SK-N-SH (cell line): ENCODE measurements at regions of chr3 and their contacts with region 1.

Region 1: DNA sequence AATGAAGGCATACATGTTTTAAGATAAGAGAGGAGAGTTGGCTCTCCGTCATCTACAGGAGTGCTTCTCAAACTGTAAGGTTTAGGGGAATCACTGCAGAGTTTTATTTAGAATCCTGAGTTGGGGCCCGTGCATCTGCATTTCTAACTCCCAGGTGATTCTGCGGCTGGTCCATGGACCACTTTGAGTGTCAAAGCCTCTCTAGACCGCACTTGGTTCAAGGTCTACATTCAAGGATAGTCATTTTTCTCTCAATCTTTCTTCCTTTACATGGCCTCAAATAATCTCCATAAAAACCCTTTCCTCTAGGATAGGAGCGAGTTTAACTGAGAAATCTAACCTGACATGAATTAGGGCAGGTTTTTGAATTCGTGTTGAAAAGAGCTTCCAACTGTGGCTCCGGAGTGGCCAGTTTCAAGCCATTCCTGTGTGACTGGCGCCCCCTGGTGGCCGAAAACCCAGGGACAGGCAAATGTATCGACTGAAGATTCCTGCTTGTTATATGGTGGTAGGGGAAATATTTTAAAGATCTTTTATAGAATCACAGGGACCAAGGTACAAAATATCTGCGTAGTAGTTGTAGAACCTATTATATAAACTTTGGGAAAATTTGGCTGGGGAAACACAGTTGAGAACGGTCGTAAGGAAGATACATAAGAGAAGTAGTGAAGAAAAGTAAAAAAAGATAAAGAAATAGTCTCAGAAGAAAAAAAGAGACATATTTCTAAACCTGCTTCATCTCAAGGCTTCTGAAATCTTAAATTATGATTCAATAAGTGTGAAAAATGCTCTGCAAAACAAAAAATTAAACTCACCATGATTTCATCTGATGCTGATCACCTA is 11.9 kb downstream of the GABRR3 start:
- DNase-seq: peak; percentile 42
- H3K4me3 ChIP-seq: peak overlapping the region in 1 of 2 experiments; percentile 40; a peak in 1 of 4 replicates
- H3K27ac ChIP-seq: no peak overlapping the region
- H3K4me1 ChIP-seq: no peaks in the 10 kb centered on the region
- H3K27me3 ChIP-seq: peaks cover 9% of the 10 kb centered on the region; the same call in 1 of the 2 replicates
- CTCF ChIP-seq: peak; percentile 98
- EP300 ChIP-seq: no peak
- RAD21 ChIP-seq: peak; percentile 98

Region 2: GRCh38 chr3:97719156-97719821 is 303.9 kb before region 1 on chr3:
- CTCF ChIA-PET with region 1: interaction called, 22 read pairs
- POLR2A ChIA-PET with region 1: no interaction called
- DNase-seq: peak; percentile 60
- H3K4me3 ChIP-seq: peak overlapping the region in 1 of 2 experiments; percentile 38; a peak in 1 of 4 replicates
- H3K27ac ChIP-seq: no peak overlapping the region
- H3K4me1 ChIP-seq: peaks cover 0 to 2% of the 10 kb centered on the region in 2 experiments; a peak in 2 of 4 replicates
- H3K27me3 ChIP-seq: no peaks in the 10 kb centered on the region
- CTCF ChIP-seq: peak; percentile 97
- EP300 ChIP-seq: no peak
- RAD21 ChIP-seq: peak; percentile 92

Region 3: DNA sequence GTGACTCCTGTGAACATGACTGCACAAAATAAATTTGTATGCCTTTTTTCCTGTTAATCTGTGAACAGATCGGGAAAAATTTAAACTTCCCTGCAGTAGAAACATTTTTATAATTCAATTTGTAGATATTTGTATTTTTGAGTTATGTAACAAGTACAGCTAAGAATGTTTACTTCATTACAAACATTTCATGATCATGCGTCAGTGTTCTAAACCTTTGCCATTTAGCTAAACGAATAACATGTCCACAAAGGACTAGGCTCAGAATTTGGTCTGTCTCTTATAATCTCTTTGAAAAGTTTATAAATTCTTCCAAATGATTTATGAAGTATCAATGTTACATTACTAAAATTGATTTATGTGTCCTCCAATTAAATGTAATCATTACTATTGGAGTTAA is 218.7 kb before region 1 on chr3:
- CTCF ChIA-PET with region 1: interaction called, 128 read pairs
- POLR2A ChIA-PET with region 1: no interaction called
- DNase-seq: no peak
- H3K4me3 ChIP-seq: no peak overlapping the region
- H3K27ac ChIP-seq: no peak overlapping the region
- H3K4me1 ChIP-seq: no peaks in the 10 kb centered on the region
- H3K27me3 ChIP-seq: no peaks in the 10 kb centered on the region
- CTCF ChIP-seq: no peak
- EP300 ChIP-seq: no peak
- RAD21 ChIP-seq: no peak

Region 4: GRCh38 chr3:97940034-97940433 is 83.2 kb before region 1 on chr3:
- CTCF ChIA-PET with region 1: interaction called, 17 read pairs
- POLR2A ChIA-PET with region 1: no interaction called
- DNase-seq: no peak
- H3K4me3 ChIP-seq: no peak overlapping the region
- H3K27ac ChIP-seq: no peak overlapping the region
- H3K4me1 ChIP-seq: no peaks in the 10 kb centered on the region
- H3K27me3 ChIP-seq: no peaks in the 10 kb centered on the region
- CTCF ChIP-seq: peak; percentile 21
- EP300 ChIP-seq: no peak
- RAD21 ChIP-seq: peak; percentile 54

Region 5: DNA sequence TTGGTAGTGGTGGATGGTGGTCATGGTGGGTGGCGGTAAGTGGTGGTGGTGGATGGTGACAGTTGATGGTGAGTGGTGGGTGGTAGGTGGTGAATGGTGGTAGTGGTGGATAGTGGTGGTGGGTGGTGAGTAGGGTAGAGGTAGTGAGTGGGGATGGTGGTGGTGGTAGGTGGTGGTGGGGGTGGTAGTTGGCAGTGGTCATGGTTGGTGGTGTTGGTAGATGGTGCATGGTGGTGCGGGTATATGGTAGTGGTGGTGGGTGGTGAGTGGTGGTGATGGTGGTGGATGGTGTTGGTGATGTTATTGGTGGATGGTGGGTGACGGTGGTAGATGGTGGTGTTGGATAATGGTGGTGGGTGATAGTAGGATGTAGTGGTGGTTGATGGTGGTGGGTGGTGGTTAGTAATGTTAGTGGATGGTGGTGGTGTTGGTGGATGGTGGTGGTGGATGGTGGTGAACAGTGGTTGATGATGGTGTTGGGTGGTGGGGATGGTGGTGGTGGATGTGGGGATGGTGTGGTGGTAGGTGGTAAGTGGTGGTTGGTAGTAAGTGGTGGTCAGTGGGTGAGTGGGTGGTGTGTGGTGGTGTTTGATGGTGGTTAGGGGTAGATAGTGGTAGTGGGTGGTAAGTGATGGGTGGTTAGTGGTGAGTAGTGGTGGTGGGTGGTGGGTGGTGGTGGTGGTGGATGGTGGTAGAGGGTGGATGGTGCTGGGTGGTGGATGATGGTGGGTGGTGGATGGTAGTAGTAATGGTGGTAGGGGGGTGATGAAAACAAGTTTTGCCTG is 34.2 kb before region 1 on chr3:
- CTCF ChIA-PET with region 1: no interaction called
- POLR2A ChIA-PET with region 1: no interaction called
- DNase-seq: no peak
- H3K4me3 ChIP-seq: no peak overlapping the region
- H3K27ac ChIP-seq: no peak overlapping the region
- H3K4me1 ChIP-seq: no peaks in the 10 kb centered on the region
- H3K27me3 ChIP-seq: no peaks in the 10 kb centered on the region
- CTCF ChIP-seq: no peak
- EP300 ChIP-seq: no peak
- RAD21 ChIP-seq: no peak

Region 6: GRCh38 chr3:98329392-98330124 is 306.4 kb after region 1 on chr3:
- CTCF ChIA-PET with region 1: interaction called, 10 read pairs
- POLR2A ChIA-PET with region 1: no interaction called
- DNase-seq: peak; percentile 32
- H3K4me3 ChIP-seq: no peak overlapping the region; a peak in 1 of 4 replicates
- H3K27ac ChIP-seq: no peak overlapping the region
- H3K4me1 ChIP-seq: no peaks in the 10 kb centered on the region
- H3K27me3 ChIP-seq: peaks cover 4% of the 10 kb centered on the region; the same call in 1 of the 2 replicates
- CTCF ChIP-seq: peak; percentile 81
- EP300 ChIP-seq: no peak
- RAD21 ChIP-seq: peak; percentile 78